A673 (cell line): ENCODE measurements at regions of chr18 and their contacts with region 1.

Region 1: DNA sequence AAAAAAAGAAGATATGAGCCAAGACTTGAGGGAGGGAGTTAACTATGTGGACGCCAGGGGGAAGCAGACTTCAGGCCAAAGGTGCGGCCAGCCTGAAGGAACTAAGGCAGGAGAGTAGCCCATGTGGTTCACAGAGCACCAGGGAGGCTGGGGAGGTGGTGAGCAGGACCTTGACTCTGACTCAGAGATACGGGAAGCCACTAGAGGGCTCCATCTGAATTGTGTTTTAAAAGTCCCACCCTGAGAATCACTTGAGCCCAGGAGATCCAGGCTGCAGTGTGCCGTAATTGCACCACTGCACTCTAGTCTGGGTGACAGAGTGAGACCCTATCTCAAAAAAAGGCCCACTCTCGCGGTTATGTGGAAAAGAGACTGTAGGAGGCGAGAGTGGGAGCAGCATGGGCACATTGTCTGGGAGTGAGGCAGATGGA is 12.3 kb downstream of the CEP192 start:
- DNase-seq: peak; percentile 54
- H3K4me3 ChIP-seq: no peak overlapping the region
- H3K27ac ChIP-seq: no peak overlapping the region
- H3K4me1 ChIP-seq: no peaks in the 10 kb centered on the region
- H3K27me3 ChIP-seq: no peaks in the 10 kb centered on the region
- CTCF ChIP-seq: peak; percentile 62

Region 2: DNA sequence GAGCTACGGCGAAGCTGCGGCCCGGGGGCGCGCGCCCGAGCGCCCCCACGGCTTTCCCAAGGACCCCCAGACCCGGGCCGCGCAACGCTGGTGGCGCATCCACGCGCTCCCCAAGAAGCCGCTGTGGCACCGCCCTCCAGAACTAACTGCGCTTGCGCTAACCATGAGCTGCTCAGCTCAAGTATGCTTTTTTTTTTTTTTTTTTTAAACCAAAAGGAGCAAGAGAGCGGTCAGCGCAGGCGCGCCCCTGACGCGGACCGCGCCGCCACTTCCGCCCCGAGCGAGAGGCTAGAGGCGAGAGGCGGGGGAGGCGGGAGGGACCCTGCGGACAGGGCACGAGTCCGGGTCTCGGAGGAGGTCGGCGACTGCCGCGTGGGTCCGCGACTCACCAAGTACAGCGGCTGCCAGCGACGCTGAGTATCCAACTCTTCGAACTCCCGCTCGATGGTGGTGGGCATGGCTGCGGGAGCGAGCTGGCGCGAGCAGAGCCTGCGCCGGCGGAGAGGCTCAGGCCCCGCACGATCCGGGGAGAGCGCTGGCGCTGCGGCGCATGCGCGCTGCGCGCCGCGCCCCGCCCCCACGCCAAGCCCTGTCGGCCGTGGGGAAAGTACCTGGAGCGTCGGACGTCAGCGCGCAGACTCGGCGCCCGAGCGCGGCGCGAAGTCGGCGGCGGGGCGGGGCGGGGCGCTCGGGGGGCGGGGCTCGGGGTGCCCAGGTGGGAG is 119.6 kb before region 1 on chr18 and contains the start of gene PTPN2:
- CTCF ChIA-PET with region 1: no interaction called
- POLR2A ChIA-PET with region 1: no interaction called
- intact Hi-C with region 1: no loop called
- DNase-seq: peak; percentile 94
- H3K4me3 ChIP-seq: peak within 1 kb of the TSS; percentile 89
- H3K27ac ChIP-seq: peak within 1 kb of the TSS; percentile 99
- H3K4me1 ChIP-seq: peaks cover 15% of the 10 kb centered on the region
- H3K27me3 ChIP-seq: no peaks in the 10 kb centered on the region
- CTCF ChIP-seq: no peak
- total RNA-seq, gene PTPN2: 35.8 and 44.7 TPM in 2 replicates

Region 3: DNA sequence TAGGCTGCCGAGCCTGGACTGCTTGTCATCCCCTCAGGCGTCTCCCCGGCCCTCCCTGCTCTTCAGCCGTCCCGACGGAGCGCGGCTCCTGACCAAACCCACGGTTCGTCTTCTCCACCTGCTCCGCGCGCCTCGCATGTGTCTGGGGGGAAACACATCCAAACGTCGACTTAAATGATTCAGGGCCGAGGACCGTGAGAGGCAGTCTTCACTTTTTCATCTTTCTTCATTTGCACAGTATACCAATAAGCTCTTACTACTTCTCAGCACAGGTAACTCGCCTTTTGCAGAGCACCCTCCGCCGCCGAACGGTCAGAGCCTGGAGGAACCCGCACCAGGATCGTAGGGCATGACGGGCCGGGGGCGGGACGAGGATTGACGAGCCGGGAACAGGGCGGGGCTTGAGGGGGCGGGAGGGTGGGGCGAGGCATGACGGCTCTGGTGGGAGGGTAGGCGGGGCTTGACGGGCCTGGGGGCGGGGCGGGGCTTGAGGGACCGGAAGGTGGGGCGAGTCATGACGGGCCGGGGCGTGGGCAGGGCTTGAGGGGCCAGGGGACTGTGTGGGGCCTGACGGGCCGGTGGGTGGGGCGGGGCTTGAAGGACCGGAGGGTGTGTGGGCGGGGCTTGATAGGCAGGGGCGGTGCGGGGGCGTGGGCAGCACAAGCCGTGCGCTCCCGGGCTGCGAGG is 56.0 kb before region 1 on chr18 and contains the start of gene SEH1L:
- CTCF ChIA-PET with region 1: no interaction called
- POLR2A ChIA-PET with region 1: no interaction called
- intact Hi-C with region 1: no loop called
- DNase-seq: peak; percentile 98
- H3K4me3 ChIP-seq: peak within 1 kb of the TSS; percentile 76
- H3K27ac ChIP-seq: peak within 1 kb of the TSS; percentile 98
- H3K4me1 ChIP-seq: peaks cover 17% of the 10 kb centered on the region
- H3K27me3 ChIP-seq: no peaks in the 10 kb centered on the region
- CTCF ChIP-seq: no peak
- total RNA-seq, gene SEH1L: 104 and 105 TPM in 2 replicates

Region 4: DNA sequence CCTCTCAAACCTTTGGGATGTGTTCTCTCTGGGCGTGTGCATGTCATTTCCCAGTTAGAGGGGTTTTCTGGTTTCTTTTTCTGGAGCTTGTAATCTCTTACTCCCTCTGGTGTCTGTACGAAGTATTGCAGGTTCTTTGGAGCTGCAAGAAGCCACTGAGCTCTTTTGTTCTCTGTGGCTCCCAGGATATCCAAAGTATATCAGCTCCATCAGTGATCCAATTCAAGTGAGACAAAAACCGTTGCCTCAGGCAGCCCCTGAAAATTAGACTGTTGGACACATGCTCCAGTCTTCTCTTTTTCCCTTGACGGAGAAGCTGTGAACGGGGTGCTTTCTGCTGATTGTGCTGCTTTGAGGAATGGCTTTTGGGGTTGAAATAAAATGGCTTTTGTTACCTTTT is 156.1 kb after region 1 on chr18:
- CTCF ChIA-PET with region 1: interaction called, 3 read pairs
- POLR2A ChIA-PET with region 1: no interaction called
- intact Hi-C with region 1: loop called (anchors 1 kb)
- DNase-seq: peak; percentile 82
- H3K4me3 ChIP-seq: no peak overlapping the region
- H3K27ac ChIP-seq: no peak overlapping the region
- H3K4me1 ChIP-seq: no peaks in the 10 kb centered on the region
- H3K27me3 ChIP-seq: no peaks in the 10 kb centered on the region
- CTCF ChIP-seq: peak; percentile 76

Region 5: GRCh38 chr18:13629841-13630715 is 626.6 kb after region 1 on chr18:
- CTCF ChIA-PET with region 1: no interaction called
- POLR2A ChIA-PET with region 1: no interaction called
- intact Hi-C with region 1: loop called (anchors 10 kb)
- DNase-seq: peak; percentile 80
- H3K4me3 ChIP-seq: no peak overlapping the region
- H3K27ac ChIP-seq: no peak overlapping the region
- H3K4me1 ChIP-seq: no peaks in the 10 kb centered on the region
- H3K27me3 ChIP-seq: no peaks in the 10 kb centered on the region
- CTCF ChIP-seq: peak; percentile 78